Activated B cell treated with CpG ODN at 0.5 μM for 24 hours (primary cell): ENCODE measurements at regions of chr1 and their contacts with region 1.

Region 1: DNA sequence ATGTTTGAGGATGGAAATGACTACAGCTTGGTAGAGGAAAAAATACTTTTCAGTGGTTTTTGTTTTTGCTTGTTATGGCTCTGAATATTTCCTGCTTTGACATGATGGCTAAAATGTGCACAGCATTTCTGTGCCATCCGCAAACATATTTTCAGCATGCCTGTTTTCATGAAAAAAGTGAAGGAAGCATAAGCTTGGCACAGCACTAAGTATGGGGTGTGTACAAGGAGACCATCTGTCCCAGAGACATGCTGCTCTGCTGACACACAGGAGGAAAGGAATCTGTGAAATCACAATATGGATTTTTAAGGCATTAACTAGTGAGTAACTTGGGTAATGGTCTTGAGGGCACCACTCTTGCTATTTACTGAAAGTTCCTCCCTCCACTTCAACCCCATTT is 595.5 kb downstream of the RWDD3 start:
- DNase-seq: no peak
- ATAC-seq: no peak
- H3K4me3 Mint-ChIP-seq: no peak overlapping the region
- H3K27ac Mint-ChIP-seq: no peak overlapping the region
- H3K4me1 Mint-ChIP-seq: no peaks in the 10 kb centered on the region
- H3K27me3 Mint-ChIP-seq: no peaks in the 10 kb centered on the region
- CTCF ChIP-seq: no peak

Region 2: DNA sequence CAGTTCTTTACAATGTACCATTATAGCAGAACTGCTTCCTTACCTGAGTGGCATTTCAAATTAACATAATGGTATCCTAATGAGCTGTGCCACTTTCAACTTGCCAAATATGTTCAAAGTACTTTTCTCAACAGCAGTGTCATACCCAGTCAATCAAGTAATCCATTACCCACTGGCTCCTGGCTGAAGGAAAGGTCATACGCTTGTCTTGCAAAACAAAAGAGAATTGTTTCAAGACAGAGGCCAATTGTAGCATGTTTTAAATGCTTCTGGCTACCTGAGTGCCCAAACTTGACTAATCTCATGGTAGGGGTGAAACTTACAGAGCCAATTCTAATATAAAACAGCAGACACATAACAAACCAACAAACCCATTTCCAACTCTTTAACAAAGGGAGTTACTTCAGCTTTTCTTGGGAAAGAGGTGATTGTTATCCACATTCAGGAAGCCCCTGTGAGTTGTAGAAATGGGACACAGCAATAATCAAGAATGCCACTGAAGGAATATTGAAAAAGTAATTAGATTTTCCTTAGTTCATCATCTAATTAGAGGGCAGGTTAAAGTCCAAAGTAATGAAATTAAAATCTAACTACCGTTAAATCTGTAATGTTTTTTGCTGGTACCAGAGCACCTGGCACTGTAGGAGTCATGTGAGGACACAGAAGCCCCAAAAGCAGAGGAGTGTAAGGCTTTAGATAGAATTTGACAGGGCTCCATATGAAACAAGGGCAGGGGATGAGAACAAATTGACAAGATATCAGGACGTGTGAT is 353.7 kb before region 1 on chr1:
- CTCF ChIA-PET with region 1: no interaction called
- POLR2A ChIA-PET with region 1: no interaction called
- intact Hi-C with region 1: no loop called
- DNase-seq: no peak
- ATAC-seq: no peak
- H3K4me3 Mint-ChIP-seq: no peak overlapping the region
- H3K27ac Mint-ChIP-seq: no peak overlapping the region
- H3K4me1 Mint-ChIP-seq: no peaks in the 10 kb centered on the region
- H3K27me3 Mint-ChIP-seq: no peaks in the 10 kb centered on the region
- CTCF ChIP-seq: no peak

Region 3: GRCh38 chr1:95850763-95851162 is 21.2 kb after region 1 on chr1:
- CTCF ChIA-PET with region 1: no interaction called
- POLR2A ChIA-PET with region 1: no interaction called
- intact Hi-C with region 1: loop called (anchors 2 kb)
- DNase-seq: no peak
- ATAC-seq: no peak
- H3K4me3 Mint-ChIP-seq: no peak overlapping the region
- H3K27ac Mint-ChIP-seq: no peak overlapping the region
- H3K4me1 Mint-ChIP-seq: no peaks in the 10 kb centered on the region
- H3K27me3 Mint-ChIP-seq: no peaks in the 10 kb centered on the region
- CTCF ChIP-seq: no peak

Region 4: DNA sequence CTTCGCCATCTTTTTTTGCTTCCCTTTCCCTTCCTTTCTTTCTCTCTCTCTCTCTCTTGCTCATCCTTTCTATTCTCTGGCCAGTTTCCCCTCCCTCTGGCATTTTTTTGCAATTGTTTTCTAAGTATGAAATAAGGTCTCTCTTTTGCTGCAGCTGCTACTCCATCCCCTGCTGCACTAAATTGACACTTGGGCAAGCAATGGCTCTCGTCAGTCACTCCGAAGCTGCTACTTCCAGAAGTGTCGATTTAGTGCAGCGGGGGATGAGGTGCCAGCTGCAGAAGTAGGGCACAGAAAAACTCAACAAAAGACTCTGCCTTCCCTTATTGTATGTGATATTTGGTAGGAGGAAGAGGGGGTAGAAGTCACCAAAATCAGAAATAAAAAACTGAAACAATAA is 46.7 kb after region 1 on chr1:
- CTCF ChIA-PET with region 1: no interaction called
- POLR2A ChIA-PET with region 1: no interaction called
- intact Hi-C with region 1: no loop called
- DNase-seq: no peak
- ATAC-seq: no peak
- H3K4me3 Mint-ChIP-seq: no peak overlapping the region
- H3K27ac Mint-ChIP-seq: no peak overlapping the region
- H3K4me1 Mint-ChIP-seq: no peaks in the 10 kb centered on the region
- H3K27me3 Mint-ChIP-seq: no peaks in the 10 kb centered on the region
- CTCF ChIP-seq: no peak